ENCODE measurements at regions of chr4 and their contacts with region 1.

Region 1: DNA sequence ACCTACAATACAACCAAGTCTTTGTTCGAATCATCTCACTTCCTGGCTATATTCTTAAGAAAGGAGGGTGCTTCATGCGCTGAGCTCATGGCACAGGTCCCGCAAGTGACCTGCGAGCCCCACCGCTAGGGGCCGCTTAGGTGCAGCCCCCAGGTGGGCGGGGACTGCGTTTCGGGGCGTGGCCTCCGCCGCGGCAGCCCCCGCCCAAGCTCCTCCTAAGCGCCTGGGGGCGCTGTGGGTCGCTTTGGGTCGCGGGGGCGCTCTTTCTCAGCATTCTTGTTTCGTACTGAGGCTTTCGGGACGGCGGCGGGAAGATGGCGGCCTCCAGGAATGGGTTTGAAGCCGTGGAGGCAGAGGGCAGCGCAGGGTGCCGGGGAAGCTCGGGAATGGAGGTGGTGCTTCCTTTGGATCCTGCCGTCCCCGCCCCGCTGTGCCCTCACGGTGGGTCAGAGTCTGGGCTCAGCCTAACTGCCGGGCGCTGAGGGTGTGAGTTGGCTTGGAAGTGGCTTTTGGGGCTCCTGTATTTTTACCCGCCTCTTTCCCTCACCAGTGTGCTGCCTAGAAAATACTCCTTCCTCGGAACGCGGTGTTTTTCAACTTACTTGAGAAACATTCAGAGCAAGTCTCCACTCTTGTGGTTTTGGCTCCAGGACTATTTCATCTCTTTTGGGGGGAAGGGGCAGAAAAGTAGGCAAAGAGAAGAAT is at the start of gene ZCCHC4:
- DNase-seq: peak; percentile 67
- ATAC-seq: peak; percentile 95
- H3K4me3 ChIP-seq: peak within 1 kb of the TSS; percentile 98
- H3K27ac ChIP-seq: peak within 1 kb of the TSS; percentile 72
- H3K4me1 ChIP-seq: peaks cover 24% of the 10 kb centered on the region
- H3K27me3 ChIP-seq: no peaks in the 10 kb centered on the region
- CTCF ChIP-seq: peak; percentile 99 to 100 (median 100); a peak in 5 of 6 replicates
- EP300 ChIP-seq: no peak
- POLR2A ChIP-seq: peak; percentile 94
- RAD21 ChIP-seq: peak; percentile 35; the same call in 1 of the 2 replicates
- polyA plus RNA-seq, gene ZCCHC4: 3.2 to 4.5 TPM

Region 2: GRCh38 chr4:25234390-25235370 is 78.0 kb before region 1 on chr4:
- CTCF ChIA-PET with region 1: interaction called, 32 read pairs
- POLR2A ChIA-PET with region 1: interaction called, 35 read pairs
- RAD21 ChIA-PET with region 1: interaction called, 21 read pairs
- SMC1A ChIA-PET with region 1: interaction called, 38 read pairs
- in situ Hi-C with region 1: no loop called
- intact Hi-C with region 1: loop called (anchors 1 kb)
- DNase-seq: peak; percentile 78
- ATAC-seq: peak; percentile 76
- H3K4me3 ChIP-seq: peak overlapping the region; percentile 78
- H3K27ac ChIP-seq: peak overlapping the region; percentile 87
- H3K4me1 ChIP-seq: peaks cover 11% of the 10 kb centered on the region
- H3K27me3 ChIP-seq: no peaks in the 10 kb centered on the region
- CTCF ChIP-seq: peak; percentile 41 to 60 (median 44); a peak in 5 of 6 replicates
- EP300 ChIP-seq: 0 out of 4 replicates have a peak, but pooled peaks of 1 of the 2 experiments have one; percentile 16
- POLR2A ChIP-seq: no peak
- RAD21 ChIP-seq: peak; percentile 41

Region 3: DNA sequence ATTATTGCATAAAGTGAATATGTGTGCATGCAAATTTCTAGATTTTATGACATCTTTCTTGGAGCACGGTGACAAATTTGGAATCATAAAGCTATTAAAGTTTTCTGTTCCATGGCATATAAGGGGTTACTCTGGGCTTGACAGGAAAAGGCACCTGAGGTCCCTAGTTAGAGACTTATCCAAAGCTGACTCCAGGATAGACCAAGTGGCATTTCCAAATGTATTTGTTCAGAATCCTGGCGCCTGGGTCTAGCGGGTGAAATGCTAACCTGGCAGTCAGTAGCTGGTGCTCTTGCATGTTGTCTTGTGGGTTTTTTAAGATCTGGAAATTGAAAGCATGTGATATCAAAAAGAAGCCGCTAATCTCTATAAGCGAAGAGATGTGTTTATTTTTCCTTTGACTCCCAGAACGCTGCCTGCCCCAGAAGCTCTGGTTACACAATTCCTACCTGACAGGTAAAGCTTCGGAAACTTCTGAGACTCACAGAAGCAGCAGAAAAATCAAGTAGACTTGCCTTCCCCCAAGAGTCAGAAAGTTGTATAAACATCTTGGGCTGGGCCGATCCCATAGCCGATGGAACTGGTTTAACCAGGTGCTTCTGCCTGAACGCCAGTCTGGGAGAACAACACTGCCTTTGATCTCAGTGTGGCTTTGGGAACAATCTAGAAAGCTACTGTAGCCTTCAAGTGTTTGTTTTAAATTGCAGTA is 13.0 kb before region 1 on chr4:
- CTCF ChIA-PET with region 1: interaction called, 18 read pairs
- POLR2A ChIA-PET with region 1: interaction called, 3 read pairs
- RAD21 ChIA-PET with region 1: no interaction called
- SMC1A ChIA-PET with region 1: no interaction called
- in situ Hi-C with region 1: no loop called
- intact Hi-C with region 1: no loop called
- DNase-seq: no peak
- ATAC-seq: no peak
- H3K4me3 ChIP-seq: no peak overlapping the region
- H3K27ac ChIP-seq: no peak overlapping the region
- H3K4me1 ChIP-seq: no peaks in the 10 kb centered on the region
- H3K27me3 ChIP-seq: no peaks in the 10 kb centered on the region
- CTCF ChIP-seq: no peak
- EP300 ChIP-seq: no peak
- POLR2A ChIP-seq: no peak
- RAD21 ChIP-seq: no peak

Region 4: GRCh38 chr4:25345744-25346143 is 33.1 kb after region 1 on chr4:
- CTCF ChIA-PET with region 1: interaction called, 18 read pairs
- POLR2A ChIA-PET with region 1: interaction called, 4 read pairs
- RAD21 ChIA-PET with region 1: interaction called, 7 read pairs
- SMC1A ChIA-PET with region 1: no interaction called
- in situ Hi-C with region 1: no loop called
- intact Hi-C with region 1: no loop called
- DNase-seq: no peak
- ATAC-seq: no peak
- H3K4me3 ChIP-seq: no peak overlapping the region
- H3K27ac ChIP-seq: no peak overlapping the region
- H3K4me1 ChIP-seq: no peaks in the 10 kb centered on the region
- H3K27me3 ChIP-seq: no peaks in the 10 kb centered on the region
- CTCF ChIP-seq: no peak
- EP300 ChIP-seq: no peak
- POLR2A ChIP-seq: no peak
- RAD21 ChIP-seq: no peak

Region 5: GRCh38 chr4:25376754-25377571 is 64.3 kb after region 1 on chr4 and contains the start of gene ANAPC4:
- CTCF ChIA-PET with region 1: interaction called, 10 read pairs
- POLR2A ChIA-PET with region 1: interaction called, 3 read pairs
- RAD21 ChIA-PET with region 1: interaction called, 3 read pairs
- SMC1A ChIA-PET with region 1: interaction called, 4 read pairs
- in situ Hi-C with region 1: no loop called
- intact Hi-C with region 1: loop called (anchors 2 kb)
- DNase-seq: peak; percentile 69
- ATAC-seq: peak; percentile 97
- H3K4me3 ChIP-seq: peak within 1 kb of the TSS; percentile 96
- H3K27ac ChIP-seq: peak within 1 kb of the TSS; percentile 55
- H3K4me1 ChIP-seq: no peaks in the 10 kb centered on the region
- H3K27me3 ChIP-seq: no peaks in the 10 kb centered on the region
- CTCF ChIP-seq: no peak
- EP300 ChIP-seq: no peak
- POLR2A ChIP-seq: peak; percentile 97
- RAD21 ChIP-seq: no peak
- polyA plus RNA-seq, gene ANAPC4: 16.3 to 17.0 TPM

Measured in GM12878 (cell line).